Gastrocnemius medialis (tissue), 4 donors: ENCODE measurements at regions of chr1 and their contacts with region 1.

Region 1: GRCh38 chr1:13667691-13668090 is 32.3 kb upstream of the PRDM2 start:
- DNase-seq: no peak
- ATAC-seq: no peak
- H3K4me3 ChIP-seq: no peak overlapping the region
- H3K27ac ChIP-seq: no peak overlapping the region
- H3K4me1 ChIP-seq: no peaks in the 10 kb centered on the region
- H3K27me3 ChIP-seq: no peaks in the 10 kb centered on the region
- CTCF ChIP-seq: no peak
- POLR2A ChIP-seq: no peak

Region 2: DNA sequence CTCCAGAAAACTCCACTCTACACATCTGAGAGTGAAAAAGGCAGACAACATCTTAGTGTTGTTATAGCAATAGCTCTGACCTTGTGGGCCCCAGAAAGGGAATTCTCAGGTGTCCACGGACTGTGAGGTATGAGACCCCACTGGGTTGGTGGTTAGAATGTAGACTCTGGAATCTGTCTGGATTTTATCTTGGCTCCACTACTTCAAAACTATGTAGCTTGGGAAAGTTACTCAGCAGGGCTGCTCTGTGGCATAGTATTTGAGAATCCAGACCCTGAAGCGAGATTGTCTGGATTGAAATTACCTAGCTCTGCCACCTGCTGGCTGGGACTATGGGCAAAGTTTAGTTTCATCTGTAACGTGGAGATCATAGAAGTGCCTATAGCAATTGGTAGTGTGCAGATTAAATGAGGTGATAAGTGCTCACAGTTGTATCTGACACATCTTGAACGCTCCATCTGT is 58.1 kb after region 1 on chr1:
- in situ Hi-C with region 1: no loop called
- intact Hi-C with region 1: loop called (anchors 5 kb)
- DNase-seq: no peak
- ATAC-seq: no peak
- H3K4me3 ChIP-seq: no peak overlapping the region
- H3K27ac ChIP-seq: no peak overlapping the region
- H3K4me1 ChIP-seq: peaks cover 5 to 7% of the 10 kb centered on the region in 2 donors
- H3K27me3 ChIP-seq: no peaks in the 10 kb centered on the region
- CTCF ChIP-seq: peak in 3 of 5 experiments; percentile 7 to 20 (median 11)
- POLR2A ChIP-seq: no peak

Region 3: GRCh38 chr1:14782741-14783591 is 1115.3 kb after region 1 on chr1:
- in situ Hi-C with region 1: no loop called
- intact Hi-C with region 1: no loop called
- DNase-seq: no peak
- ATAC-seq: no peak
- H3K4me3 ChIP-seq: no peak overlapping the region
- H3K27ac ChIP-seq: no peak overlapping the region
- H3K4me1 ChIP-seq: no peaks in the 10 kb centered on the region
- H3K27me3 ChIP-seq: no peaks in the 10 kb centered on the region
- CTCF ChIP-seq: no peak
- POLR2A ChIP-seq: no peak